CD4-positive, alpha-beta T cell (primary cell): ENCODE measurements at regions of chr2 and their contacts with region 1.

Region 1: GRCh38 chr2:144332356-144333142 is 187.4 kb downstream of the ZEB2 start:
- DNase-seq: peak; percentile 64 to 96 (median 82)
- ATAC-seq: peak; percentile 86
- H3K4me3 ChIP-seq: peak overlapping the region; percentile 70
- H3K4me3 Mint-ChIP-seq: peak overlapping the region; percentile 91
- H3K27ac ChIP-seq: no peak overlapping the region
- H3K27ac Mint-ChIP-seq: peak overlapping the region; percentile 78
- H3K4me1 ChIP-seq: peaks cover 9% of the 10 kb centered on the region
- H3K4me1 Mint-ChIP-seq: peaks cover 22% of the 10 kb centered on the region
- H3K27me3 ChIP-seq: no peaks in the 10 kb centered on the region
- H3K27me3 Mint-ChIP-seq: no peaks in the 10 kb centered on the region
- CTCF ChIP-seq: no peak

Region 2: GRCh38 chr2:144183727-144184126 is 148.8 kb before region 1 on chr2:
- CTCF ChIA-PET with region 1: no interaction called
- POLR2A ChIA-PET with region 1: interaction called, 6 read pairs
- intact Hi-C with region 1: loop called in 1 of 2 experiments (anchors 5 kb)
- DNase-seq: peak; percentile 26 to 93 (median 50)
- ATAC-seq: peak; percentile 98
- H3K4me3 ChIP-seq: peak overlapping the region; percentile 36
- H3K4me3 Mint-ChIP-seq: peak overlapping the region; percentile 70
- H3K27ac ChIP-seq: no peak overlapping the region
- H3K27ac Mint-ChIP-seq: peak overlapping the region; percentile 39
- H3K4me1 ChIP-seq: peaks cover 3% of the 10 kb centered on the region
- H3K4me1 Mint-ChIP-seq: peaks cover 15% of the 10 kb centered on the region
- H3K27me3 ChIP-seq: no peaks in the 10 kb centered on the region
- H3K27me3 Mint-ChIP-seq: no peaks in the 10 kb centered on the region
- CTCF ChIP-seq: no peak

Region 3: GRCh38 chr2:144320491-144320890 is 12.1 kb before region 1 on chr2:
- CTCF ChIA-PET with region 1: interaction called, 4 read pairs
- POLR2A ChIA-PET with region 1: interaction called, 22 read pairs
- intact Hi-C with region 1: no loop called
- DNase-seq: peak; percentile 20 to 78 (median 40)
- ATAC-seq: peak; percentile 77
- H3K4me3 ChIP-seq: no peak overlapping the region
- H3K4me3 Mint-ChIP-seq: no peak overlapping the region
- H3K27ac ChIP-seq: no peak overlapping the region
- H3K27ac Mint-ChIP-seq: peak overlapping the region; percentile 37
- H3K4me1 ChIP-seq: peaks cover 13% of the 10 kb centered on the region
- H3K4me1 Mint-ChIP-seq: peaks cover 33% of the 10 kb centered on the region
- H3K27me3 ChIP-seq: no peaks in the 10 kb centered on the region
- H3K27me3 Mint-ChIP-seq: no peaks in the 10 kb centered on the region
- CTCF ChIP-seq: no peak

Region 4: GRCh38 chr2:144402251-144402650 is 69.7 kb after region 1 on chr2:
- CTCF ChIA-PET with region 1: no interaction called
- POLR2A ChIA-PET with region 1: no interaction called
- intact Hi-C with region 1: no loop called
- DNase-seq: no peak
- ATAC-seq: no peak
- H3K4me3 ChIP-seq: no peak overlapping the region
- H3K4me3 Mint-ChIP-seq: no peak overlapping the region
- H3K27ac ChIP-seq: no peak overlapping the region
- H3K27ac Mint-ChIP-seq: no peak overlapping the region
- H3K4me1 ChIP-seq: no peaks in the 10 kb centered on the region
- H3K4me1 Mint-ChIP-seq: no peaks in the 10 kb centered on the region
- H3K27me3 ChIP-seq: no peaks in the 10 kb centered on the region
- H3K27me3 Mint-ChIP-seq: no peaks in the 10 kb centered on the region
- CTCF ChIP-seq: no peak

Region 5: DNA sequence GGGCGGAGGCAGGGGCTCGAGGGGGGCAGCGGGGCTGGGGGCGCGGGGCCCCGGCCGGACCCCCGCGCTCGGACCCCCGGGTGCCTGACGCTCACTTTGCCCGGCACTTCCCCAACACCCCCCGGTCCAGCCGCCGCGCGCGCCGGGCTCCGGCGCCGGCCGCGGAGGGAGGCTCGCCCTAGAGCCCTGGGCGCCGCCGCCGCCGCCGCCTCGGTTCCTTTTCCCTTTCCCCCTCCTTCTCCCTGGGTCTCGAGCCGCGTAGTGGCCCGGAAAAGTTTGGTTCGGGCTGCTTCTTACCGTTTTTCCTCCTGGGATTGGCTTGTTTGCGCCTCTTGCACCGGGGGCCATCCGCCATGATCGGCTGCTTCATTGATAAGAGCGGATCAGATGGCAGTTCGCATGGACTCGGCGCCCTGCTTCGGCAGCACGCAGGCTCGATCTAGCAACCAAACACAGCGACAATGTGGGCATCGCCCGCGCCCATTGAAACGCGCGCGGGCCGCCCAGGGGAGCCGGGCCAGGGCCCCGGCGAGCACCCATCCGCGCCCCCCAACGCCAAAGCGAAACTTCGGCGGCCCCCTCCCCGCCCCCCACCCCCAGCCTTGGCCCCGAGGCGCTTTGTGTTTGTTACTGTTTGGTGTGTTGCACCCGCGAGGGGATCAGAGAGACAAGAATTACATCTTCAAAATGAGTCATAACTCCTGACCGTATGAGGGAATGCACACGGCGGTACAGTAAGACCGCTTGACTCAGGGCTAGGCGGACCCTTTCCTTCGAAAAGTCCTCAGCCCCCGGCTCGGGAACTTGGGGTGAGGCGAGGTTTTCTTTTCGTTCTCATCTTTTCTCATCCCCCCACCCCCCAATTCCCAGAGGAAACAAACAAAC is 184.7 kb after region 1 on chr2:
- CTCF ChIA-PET with region 1: no interaction called
- POLR2A ChIA-PET with region 1: no interaction called
- intact Hi-C with region 1: loop called (anchors 10 kb)
- DNase-seq: peak in 7 of 14 experiments; percentile 25 to 80 (median 45)
- ATAC-seq: peak; percentile 61
- H3K4me3 ChIP-seq: peak overlapping the region; percentile 68
- H3K4me3 Mint-ChIP-seq: peak overlapping the region; percentile 96
- H3K27ac ChIP-seq: peak overlapping the region in 1 of 2 donors; percentile 48
- H3K27ac Mint-ChIP-seq: peak overlapping the region; percentile 40
- H3K4me1 ChIP-seq: peaks cover 34% of the 10 kb centered on the region
- H3K4me1 Mint-ChIP-seq: peaks cover 8% of the 10 kb centered on the region
- H3K27me3 ChIP-seq: peaks cover 55 to 77% of the 10 kb centered on the region in 2 experiments
- H3K27me3 Mint-ChIP-seq: peaks cover 38% of the 10 kb centered on the region
- CTCF ChIP-seq: no peak

Region 6: DNA sequence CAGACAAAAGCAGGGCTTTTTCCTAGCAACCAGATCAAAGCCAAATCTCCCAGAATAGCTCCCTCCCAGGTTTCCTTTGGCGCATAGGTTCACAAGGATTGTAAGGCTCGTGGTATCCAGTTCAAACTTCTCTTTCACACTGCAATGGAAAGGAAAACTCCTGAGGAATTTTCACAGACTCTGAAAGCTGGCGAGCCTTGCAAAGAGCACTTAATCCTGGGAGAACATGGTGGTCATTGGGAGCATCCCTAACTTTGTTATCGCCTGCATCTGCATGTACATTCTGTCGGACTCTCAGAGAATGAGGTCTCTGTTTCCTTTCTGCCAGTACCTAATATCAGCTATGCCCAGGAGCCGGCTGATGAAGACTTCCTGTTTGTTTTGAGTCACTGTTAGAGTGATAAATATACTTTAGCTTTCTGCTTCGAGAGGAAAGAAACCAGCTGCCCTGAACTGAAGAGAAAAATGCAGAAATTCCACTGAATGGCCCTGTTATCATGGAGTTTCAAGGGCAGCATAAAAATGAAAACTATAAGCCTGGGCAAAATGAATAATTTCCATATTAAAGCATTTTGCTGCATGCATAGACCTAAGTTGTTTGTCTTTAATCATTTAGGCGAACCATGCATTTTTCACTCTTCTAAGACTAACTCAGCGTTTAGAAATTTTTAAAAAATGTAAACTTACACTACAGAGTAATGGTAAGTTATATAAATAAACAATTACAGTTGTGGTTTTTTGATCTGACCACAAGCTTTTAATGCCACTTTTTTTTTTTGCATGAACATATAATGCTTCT is 263.7 kb after region 1 on chr2:
- CTCF ChIA-PET with region 1: no interaction called
- POLR2A ChIA-PET with region 1: no interaction called
- intact Hi-C with region 1: no loop called
- DNase-seq: peak in 2 of 14 experiments; percentile 23 to 47
- ATAC-seq: no peak
- H3K4me3 ChIP-seq: no peak overlapping the region
- H3K4me3 Mint-ChIP-seq: no peak overlapping the region
- H3K27ac ChIP-seq: no peak overlapping the region
- H3K27ac Mint-ChIP-seq: no peak overlapping the region
- H3K4me1 ChIP-seq: peaks cover 3% of the 10 kb centered on the region
- H3K4me1 Mint-ChIP-seq: no peaks in the 10 kb centered on the region
- H3K27me3 ChIP-seq: no peaks in the 10 kb centered on the region
- H3K27me3 Mint-ChIP-seq: peaks cover 5% of the 10 kb centered on the region
- CTCF ChIP-seq: no peak